ENCODE measurements at regions of chr10 and their contacts with region 1.

Region 1: GRCh38 chr10:110959379-110960332 is 40.3 kb downstream of the SHOC2 start:
- DNase-seq: no peak
- ATAC-seq: no peak
- H3K4me3 ChIP-seq: no peak overlapping the region
- H3K4me3 Mint-ChIP-seq: no peak overlapping the region
- H3K27ac ChIP-seq: no peak overlapping the region
- H3K27ac Mint-ChIP-seq: no peak overlapping the region
- H3K4me1 ChIP-seq: peaks cover 12% of the 10 kb centered on the region
- H3K4me1 Mint-ChIP-seq: peaks cover 75% of the 10 kb centered on the region
- H3K27me3 ChIP-seq: no peaks in the 10 kb centered on the region
- H3K27me3 Mint-ChIP-seq: no peaks in the 10 kb centered on the region
- CTCF ChIP-seq: no peak

Region 2: DNA sequence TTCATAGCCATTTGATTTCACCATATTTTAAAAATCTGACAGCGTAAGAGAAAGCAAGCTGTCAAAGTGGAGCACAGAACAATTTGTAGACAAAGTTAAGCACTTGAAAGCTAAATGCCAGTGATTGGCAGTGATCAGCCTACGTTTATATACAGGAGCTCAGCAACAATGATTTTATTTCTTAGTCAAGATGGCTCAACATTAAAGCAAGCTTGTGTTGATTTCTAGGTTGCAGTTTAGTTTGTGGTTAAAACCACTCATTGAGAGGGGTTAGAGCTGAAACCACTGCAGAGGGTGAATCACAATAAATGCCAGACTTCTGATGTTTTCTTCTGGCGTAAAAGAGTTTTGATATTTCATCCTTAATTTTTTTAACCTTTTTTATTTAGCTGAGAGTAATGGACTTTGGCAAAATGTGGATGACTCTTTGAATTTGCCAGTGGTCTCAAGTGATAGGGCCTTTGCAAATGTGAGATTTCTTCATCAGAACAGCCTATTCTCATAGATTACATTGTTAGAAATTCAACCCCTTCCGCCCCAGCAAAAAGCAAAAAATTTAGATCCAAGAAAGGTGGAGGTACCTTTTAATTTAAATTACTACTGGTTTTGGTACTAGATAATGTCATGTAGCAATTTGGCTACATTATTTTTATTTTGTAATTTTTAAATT is 33.5 kb after region 1 on chr10:
- CTCF ChIA-PET with region 1: no interaction called
- POLR2A ChIA-PET with region 1: interaction called, 3 read pairs
- intact Hi-C with region 1: loop called in 1 of 2 experiments (anchors 5 kb)
- DNase-seq: peak in 4 of 9 experiments; percentile 19 to 75 (median 45)
- ATAC-seq: peak; percentile 97
- H3K4me3 ChIP-seq: peak overlapping the region; percentile 5 to 14
- H3K4me3 Mint-ChIP-seq: peak overlapping the region; percentile 70
- H3K27ac ChIP-seq: peak overlapping the region in 1 of 2 experiments; percentile 20
- H3K27ac Mint-ChIP-seq: peak overlapping the region; percentile 72
- H3K4me1 ChIP-seq: peaks cover 29% of the 10 kb centered on the region
- H3K4me1 Mint-ChIP-seq: peaks cover 45% of the 10 kb centered on the region
- H3K27me3 ChIP-seq: no peaks in the 10 kb centered on the region
- H3K27me3 Mint-ChIP-seq: no peaks in the 10 kb centered on the region
- CTCF ChIP-seq: no peak